Heart right ventricle (tissue), 16 donors: ENCODE measurements at regions of chr22 and their contacts with region 1.

Region 1: GRCh38 chr22:39703928-39704639 is 133.5 kb downstream of the CACNA1I start:
- DNase-seq: peak; percentile 13 to 38
- ATAC-seq: peak in 6 of 8 donors; percentile 52 to 82 (median 74)
- H3K4me3 ChIP-seq: no peak overlapping the region
- H3K27ac ChIP-seq: no peak overlapping the region
- H3K4me1 ChIP-seq: peaks cover 0 to 11% (median 0%) of the 10 kb centered on the region in 9 donors
- H3K27me3 ChIP-seq: peaks cover 0 to 71% (median 30%) of the 10 kb centered on the region in 7 donors
- CTCF ChIP-seq: no peak

Region 2: DNA sequence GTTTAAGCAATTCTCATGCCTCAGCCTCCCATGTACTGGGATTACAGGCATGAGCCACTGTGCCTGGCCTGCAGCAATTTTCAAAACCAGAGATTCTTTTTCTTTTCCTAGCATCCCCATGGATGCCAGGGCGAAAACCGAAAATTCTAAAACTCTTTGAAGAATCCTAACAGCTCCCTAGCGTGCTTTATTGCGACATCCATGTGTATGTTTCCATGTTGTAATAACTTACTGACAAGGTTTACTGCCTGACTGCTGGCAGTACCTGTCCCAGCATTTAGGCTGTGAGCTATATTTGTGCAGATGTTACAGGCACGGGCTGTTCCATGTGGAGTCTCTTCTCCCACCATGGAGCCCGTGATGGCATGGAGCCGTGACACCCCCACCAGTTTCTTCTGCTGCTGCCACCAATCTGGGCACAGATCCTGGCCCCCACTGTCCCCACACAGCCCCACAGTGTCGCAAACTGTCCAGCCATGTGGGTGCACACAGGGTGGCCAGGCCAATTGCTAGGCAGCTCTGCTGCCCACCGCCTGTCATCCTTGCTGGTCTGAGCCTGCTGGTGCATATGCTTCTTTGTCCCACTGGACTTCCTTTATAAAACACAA is 311.6 kb before region 1 on chr22:
- intact Hi-C with region 1: loop called in 1 of 10 experiments (anchors 5 kb)
- DNase-seq: no peak
- ATAC-seq: no peak
- H3K4me3 ChIP-seq: no peak overlapping the region
- H3K27ac ChIP-seq: no peak overlapping the region
- H3K4me1 ChIP-seq: peaks cover 0 to 12% (median 9%) of the 10 kb centered on the region in 9 donors
- H3K27me3 ChIP-seq: no peaks in the 10 kb centered on the region
- CTCF ChIP-seq: no peak